GM10248 (cell line): ENCODE measurements at regions of chr2 and their contacts with region 1.

Region 1: DNA sequence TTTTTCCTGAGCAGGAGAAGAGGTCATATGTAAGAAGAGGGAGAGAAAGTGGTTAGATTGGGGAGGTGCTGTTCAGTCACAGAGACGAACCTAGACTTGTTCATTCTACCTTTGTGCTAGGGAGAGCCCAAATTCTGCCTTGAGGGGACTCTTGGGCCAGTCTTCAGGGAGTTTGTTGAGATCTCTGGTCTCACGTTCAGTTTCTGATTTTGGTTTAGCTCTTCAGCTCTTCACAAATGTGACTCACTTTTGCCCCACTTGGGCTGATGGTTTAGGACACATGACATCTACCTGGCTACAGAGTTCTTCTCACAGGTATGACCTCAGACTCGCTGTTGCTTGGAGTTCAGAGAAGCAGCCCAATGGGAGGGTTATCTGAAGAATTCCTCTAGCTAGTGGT is 49.2 kb upstream of the DARS1 start:
- DNase-seq: no peak
- CTCF ChIP-seq: no peak

Region 2: DNA sequence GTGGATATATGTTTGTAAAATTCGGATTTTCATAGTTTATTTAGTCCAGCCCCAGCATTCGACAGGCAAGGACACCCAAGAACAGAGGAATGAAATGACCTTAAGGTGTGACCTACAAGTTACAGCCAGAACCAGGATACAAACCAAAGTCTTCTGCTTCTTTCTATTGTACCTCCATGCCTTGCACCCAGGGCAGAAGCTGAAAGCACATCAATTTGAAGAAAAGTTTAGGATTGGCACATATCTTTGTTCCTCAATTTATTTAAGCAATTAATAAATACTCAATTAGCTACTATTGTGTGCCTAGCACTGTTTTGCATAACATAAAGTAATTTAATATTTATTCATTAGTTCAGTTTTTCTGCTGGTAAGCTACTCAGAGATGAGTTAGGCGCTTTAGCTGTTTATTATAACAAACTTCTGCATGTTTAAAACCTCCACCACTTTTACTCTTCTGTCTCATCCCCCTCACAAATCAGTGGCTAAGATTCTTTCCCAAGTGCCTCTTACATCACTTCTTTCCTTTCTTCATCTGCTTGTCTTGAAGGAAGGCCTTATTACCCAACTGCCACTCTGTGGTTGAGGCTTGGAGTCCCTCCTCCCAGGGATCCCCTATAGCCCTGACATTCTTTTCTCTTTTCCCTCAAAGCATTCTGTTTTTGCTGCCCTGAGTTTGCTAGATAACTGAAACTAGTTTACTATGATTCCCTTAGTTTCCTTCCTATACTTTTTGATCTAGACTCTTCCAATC is 12.1 kb before region 1 on chr2:
- CTCF ChIA-PET with region 1: interaction called, 21 read pairs
- POLR2A ChIA-PET with region 1: no interaction called
- DNase-seq: no peak
- CTCF ChIP-seq: no peak